Esophagus squamous epithelium (tissue), 5 donors: ENCODE measurements at regions of chr4 and their contacts with region 1.

Region 1: DNA sequence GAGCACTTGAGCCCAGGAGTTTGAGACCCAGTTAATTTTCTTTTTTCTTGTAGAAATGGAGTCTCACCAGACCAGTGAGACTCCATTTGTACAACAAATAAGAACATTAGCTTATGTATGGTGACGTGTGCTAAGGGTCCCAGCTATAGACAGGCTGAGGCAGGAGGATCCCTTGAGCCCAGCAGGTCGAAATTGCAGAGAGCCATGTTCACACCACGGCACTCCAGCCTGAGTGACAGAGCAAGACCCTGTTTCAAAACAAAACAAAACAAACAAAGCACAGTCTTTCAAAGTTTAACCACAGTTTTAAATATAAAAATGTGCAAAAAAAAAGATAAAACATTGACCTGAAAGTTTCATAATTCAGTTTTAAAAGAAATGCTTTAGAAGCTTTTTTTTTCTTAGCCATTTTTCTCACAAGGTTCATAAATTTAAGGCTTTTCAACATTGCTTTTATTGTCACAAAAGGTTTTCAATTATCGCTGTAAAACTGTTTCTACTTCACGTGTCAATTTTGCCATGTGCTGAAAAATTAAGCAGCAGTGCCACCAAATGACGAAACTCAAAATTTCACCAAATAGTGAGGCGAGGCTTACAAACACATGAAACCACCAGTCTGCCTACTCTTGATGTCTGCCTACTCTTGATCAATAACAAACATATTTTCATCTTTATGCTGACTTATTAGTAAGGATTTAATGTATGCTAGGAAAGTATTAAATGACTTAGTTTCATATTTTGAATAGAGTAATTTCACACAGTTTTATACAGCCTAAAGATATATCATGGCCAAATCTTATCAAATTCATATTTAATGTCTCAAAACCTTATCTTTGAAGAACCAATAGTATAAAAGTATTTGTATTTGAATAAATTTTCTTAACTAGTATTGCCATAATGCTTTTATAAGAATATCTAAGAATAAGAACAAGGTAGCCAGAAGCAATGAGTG is 126.3 kb downstream of the NEK1 start:
- DNase-seq: no peak
- H3K4me3 ChIP-seq: no peak overlapping the region
- H3K27ac ChIP-seq: no peak overlapping the region
- H3K4me1 ChIP-seq: peaks cover 0 to 4% (median 0%) of the 10 kb centered on the region in 3 donors
- H3K27me3 ChIP-seq: no peaks in the 10 kb centered on the region
- CTCF ChIP-seq: peak; percentile 26 to 60 (median 44)
- POLR2A ChIP-seq: no peak

Region 2: GRCh38 chr4:168803732-168804131 is 682.3 kb before region 1 on chr4:
- intact Hi-C with region 1: no loop called
- DNase-seq: no peak
- H3K4me3 ChIP-seq: no peak overlapping the region
- H3K27ac ChIP-seq: peak overlapping the region in 3 of 4 donors; percentile 22 to 45 (median 28)
- H3K4me1 ChIP-seq: peaks cover 10 to 15% (median 12%) of the 10 kb centered on the region in 3 donors
- H3K27me3 ChIP-seq: no peaks in the 10 kb centered on the region
- CTCF ChIP-seq: no peak
- POLR2A ChIP-seq: no peak

Region 3: GRCh38 chr4:168923526-168924194 is 562.4 kb before region 1 on chr4:
- intact Hi-C with region 1: loop called (anchors 10 kb)
- DNase-seq: no peak
- H3K4me3 ChIP-seq: no peak overlapping the region
- H3K27ac ChIP-seq: no peak overlapping the region
- H3K4me1 ChIP-seq: no peaks in the 10 kb centered on the region
- H3K27me3 ChIP-seq: no peaks in the 10 kb centered on the region
- CTCF ChIP-seq: peak; percentile 69 to 85 (median 76)
- POLR2A ChIP-seq: no peak

Region 4: GRCh38 chr4:169024762-169025161 is 461.3 kb before region 1 on chr4:
- intact Hi-C with region 1: loop called (anchors 10 kb)
- DNase-seq: no peak
- H3K4me3 ChIP-seq: no peak overlapping the region
- H3K27ac ChIP-seq: no peak overlapping the region
- H3K4me1 ChIP-seq: peaks cover 0 to 5% (median 0%) of the 10 kb centered on the region in 3 donors
- H3K27me3 ChIP-seq: no peaks in the 10 kb centered on the region
- CTCF ChIP-seq: peak; percentile 14 to 68 (median 36)
- POLR2A ChIP-seq: no peak